Heart left ventricle (tissue), 16 donors: ENCODE measurements at regions of chr11 and their contacts with region 1.

Region 1: DNA sequence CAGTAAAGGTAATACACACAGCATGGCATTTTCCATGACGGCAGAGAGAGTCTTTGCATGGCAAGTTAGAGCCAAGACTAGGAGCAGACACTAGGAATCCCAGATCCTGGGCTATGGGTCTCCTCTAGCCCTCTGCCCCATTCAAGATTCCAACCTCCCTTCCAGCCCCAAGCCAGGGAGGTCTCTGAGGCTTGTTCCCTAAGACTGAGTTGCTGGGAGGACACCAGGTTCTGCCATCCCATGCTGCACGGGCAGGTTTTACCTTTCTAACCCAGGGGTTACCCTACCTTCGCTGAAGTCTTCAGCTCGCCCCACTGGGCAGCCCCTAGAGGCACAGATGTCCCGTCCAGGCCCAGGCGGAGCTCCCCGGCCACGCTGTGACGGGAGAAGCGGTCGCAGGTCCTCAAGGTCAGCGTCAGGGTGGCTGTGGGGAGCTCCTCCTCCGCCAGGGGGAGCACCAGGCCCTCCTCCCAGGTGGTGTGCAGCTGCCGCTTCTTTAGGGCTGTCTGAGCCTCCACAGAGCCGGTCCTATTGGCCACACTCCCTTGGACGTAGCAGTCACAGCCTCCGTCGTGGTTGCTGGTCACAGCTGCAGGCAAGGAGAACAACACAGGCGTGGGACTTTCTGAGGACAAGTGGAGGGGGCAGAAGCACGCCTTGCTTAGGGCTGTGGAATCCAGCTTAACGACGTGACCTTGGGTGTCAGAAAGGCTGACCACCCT is 33.8 kb downstream of the SYT13 start:
- DNase-seq: peak; percentile 35 to 71 (median 68)
- ATAC-seq: peak; percentile 58 to 94 (median 82)
- H3K4me3 ChIP-seq: peak overlapping the region in 4 of 12 donors; percentile 1 to 15 (median 8)
- H3K27ac ChIP-seq: no peak overlapping the region
- H3K4me1 ChIP-seq: peaks cover 0 to 3% (median 0%) of the 10 kb centered on the region in 12 donors
- H3K27me3 ChIP-seq: peaks cover 0 to 14% (median 0%) of the 10 kb centered on the region in 9 donors
- CTCF ChIP-seq: peak; percentile 46 to 73 (median 60)
- POLR2A ChIP-seq: no peak

Region 2: DNA sequence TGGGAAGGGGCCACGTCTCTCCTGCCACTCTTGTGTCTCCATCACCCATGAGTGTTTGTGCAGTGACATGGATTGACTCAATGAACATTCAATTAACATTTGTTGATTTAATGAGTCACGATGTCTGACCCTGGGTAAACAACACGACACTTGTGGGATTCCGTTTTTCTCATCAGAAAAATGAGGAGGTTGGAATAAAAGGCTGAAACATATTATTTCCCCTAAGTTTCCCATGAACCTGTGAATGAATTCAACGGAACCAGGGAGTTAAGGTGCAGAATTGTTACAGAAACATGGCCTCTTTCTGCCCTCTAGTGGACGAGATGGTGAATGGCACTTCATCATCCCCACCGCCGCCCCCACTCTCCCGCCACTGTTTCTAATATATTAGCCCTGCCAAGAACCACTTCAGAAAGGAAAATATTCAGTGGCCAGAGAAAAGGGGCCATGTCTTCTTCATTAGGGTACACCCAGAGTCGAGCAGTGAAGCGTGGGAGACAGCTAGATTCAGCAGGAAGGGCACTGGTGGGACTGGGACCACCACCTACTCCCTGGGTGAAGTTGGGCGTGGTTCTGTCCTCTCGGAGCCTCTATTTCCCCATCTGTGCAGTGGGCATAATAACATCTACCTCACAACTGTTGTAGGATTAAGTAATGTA is 80.1 kb after region 1 on chr11:
- intact Hi-C with region 1: loop called in 2 of 10 experiments (anchors 5 kb)
- DNase-seq: peak in 1 of 5 donors; percentile 38
- ATAC-seq: peak; percentile 57 to 70 (median 69)
- H3K4me3 ChIP-seq: peak overlapping the region in 9 of 12 donors; percentile 1 to 44 (median 35)
- H3K27ac ChIP-seq: peak overlapping the region; percentile 55 to 80 (median 73)
- H3K4me1 ChIP-seq: peaks cover 0 to 22% (median 5%) of the 10 kb centered on the region in 12 donors
- H3K27me3 ChIP-seq: no peaks in the 10 kb centered on the region
- CTCF ChIP-seq: peak; percentile 74 to 93 (median 88)
- POLR2A ChIP-seq: no peak